Ascending aorta (tissue), 2 donors: ENCODE measurements at regions of chr14 and their contacts with region 1.

Region 1: GRCh38 chr14:103808403-103809001 is 38.9 kb downstream of the PPP1R13B start:
- DNase-seq: peak in 1 of 2 donors; percentile 73
- H3K4me3 ChIP-seq: no peak overlapping the region
- H3K27ac ChIP-seq: no peak overlapping the region
- H3K4me1 ChIP-seq: no peaks in the 10 kb centered on the region
- H3K27me3 ChIP-seq: no peaks in the 10 kb centered on the region
- CTCF ChIP-seq: peak; percentile 83 to 86 (median 85)

Region 2: DNA sequence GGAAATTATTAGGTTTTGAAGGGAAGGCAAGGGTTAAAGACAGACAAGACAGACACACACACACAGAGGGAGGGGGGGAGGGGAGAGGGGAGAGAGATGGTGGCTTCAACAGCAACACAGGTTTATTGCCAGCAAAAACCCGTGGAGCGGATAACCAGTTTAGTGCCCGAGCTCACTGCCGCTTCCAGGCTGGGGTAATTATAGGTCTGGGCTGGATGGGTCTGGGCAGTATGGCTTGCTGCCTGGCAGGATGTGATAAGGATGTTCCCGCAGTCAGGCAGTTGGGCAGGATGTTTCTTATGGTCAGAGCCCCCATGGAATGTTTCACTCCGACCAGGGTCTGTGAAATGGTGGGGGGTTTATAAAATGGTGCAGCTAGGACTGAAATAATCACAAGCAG is 115.4 kb after region 1 on chr14:
- intact Hi-C with region 1: no loop called
- DNase-seq: no peak
- H3K4me3 ChIP-seq: no peak overlapping the region
- H3K27ac ChIP-seq: no peak overlapping the region
- H3K4me1 ChIP-seq: peaks cover 6 to 7% of the 10 kb centered on the region in 2 donors
- H3K27me3 ChIP-seq: no peaks in the 10 kb centered on the region
- CTCF ChIP-seq: no peak

Region 3: GRCh38 chr14:103984196-103984595 is 175.7 kb after region 1 on chr14:
- intact Hi-C with region 1: loop called (anchors 5 kb)
- DNase-seq: no peak
- H3K4me3 ChIP-seq: no peak overlapping the region
- H3K27ac ChIP-seq: no peak overlapping the region
- H3K4me1 ChIP-seq: no peaks in the 10 kb centered on the region
- H3K27me3 ChIP-seq: no peaks in the 10 kb centered on the region
- CTCF ChIP-seq: no peak